A673 (cell line): ENCODE measurements at regions of chr11 and their contacts with region 1.

Region 1: GRCh38 chr11:10792398-10792975 is 16.2 kb downstream of the EIF4G2 start:
- DNase-seq: peak; percentile 74
- H3K4me3 ChIP-seq: peak overlapping the region; percentile 10
- H3K27ac ChIP-seq: no peak overlapping the region
- H3K4me1 ChIP-seq: no peaks in the 10 kb centered on the region
- H3K27me3 ChIP-seq: no peaks in the 10 kb centered on the region
- CTCF ChIP-seq: peak; percentile 91

Region 2: GRCh38 chr11:10338287-10338686 is 454.2 kb before region 1 on chr11:
- CTCF ChIA-PET with region 1: no interaction called
- POLR2A ChIA-PET with region 1: no interaction called
- intact Hi-C with region 1: no loop called
- DNase-seq: no peak
- H3K4me3 ChIP-seq: no peak overlapping the region
- H3K27ac ChIP-seq: no peak overlapping the region
- H3K4me1 ChIP-seq: no peaks in the 10 kb centered on the region
- H3K27me3 ChIP-seq: no peaks in the 10 kb centered on the region
- CTCF ChIP-seq: no peak

Region 3: DNA sequence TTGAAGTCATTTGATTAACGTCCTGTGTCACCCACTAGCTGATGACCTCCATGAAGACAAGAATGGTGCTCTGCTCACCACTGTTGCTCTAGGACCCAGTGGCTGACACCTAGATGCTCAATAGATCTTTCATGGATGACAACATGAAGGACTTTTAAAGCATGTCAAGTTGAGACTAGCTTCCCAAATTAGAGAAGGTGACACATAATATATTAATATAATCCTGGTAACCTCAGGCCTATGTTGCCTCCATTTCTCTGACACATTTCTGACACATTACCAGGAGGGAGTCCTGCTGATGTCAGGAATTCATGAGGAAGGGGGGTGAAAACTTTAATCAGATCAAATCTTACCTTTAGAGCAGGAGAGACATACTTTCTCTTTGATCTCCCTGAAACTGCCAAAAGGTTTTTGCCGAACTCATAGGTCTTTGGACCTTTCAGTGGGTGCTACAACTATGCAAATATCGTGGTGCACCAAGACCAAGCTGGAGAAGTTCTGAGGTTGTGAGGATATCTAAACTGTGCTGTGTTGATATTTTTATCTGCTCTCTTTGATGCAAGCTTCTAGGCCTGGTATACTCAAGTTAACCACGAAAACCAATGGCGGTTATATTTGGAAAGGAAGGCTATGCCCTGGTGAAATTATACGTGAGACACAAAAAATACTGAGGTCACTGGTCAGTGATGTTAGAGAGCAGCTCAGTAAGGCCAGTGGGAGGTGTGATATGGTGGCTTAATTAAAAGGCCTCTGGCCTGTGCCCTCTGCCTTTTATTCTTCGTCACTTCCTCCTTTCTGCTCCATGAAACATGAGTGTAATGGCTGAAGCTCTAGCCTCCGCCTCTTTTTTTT is 350.6 kb before region 1 on chr11:
- CTCF ChIA-PET with region 1: no interaction called
- POLR2A ChIA-PET with region 1: no interaction called
- intact Hi-C with region 1: no loop called
- DNase-seq: no peak
- H3K4me3 ChIP-seq: no peak overlapping the region
- H3K27ac ChIP-seq: no peak overlapping the region
- H3K4me1 ChIP-seq: no peaks in the 10 kb centered on the region
- H3K27me3 ChIP-seq: no peaks in the 10 kb centered on the region
- CTCF ChIP-seq: no peak

Region 4: DNA sequence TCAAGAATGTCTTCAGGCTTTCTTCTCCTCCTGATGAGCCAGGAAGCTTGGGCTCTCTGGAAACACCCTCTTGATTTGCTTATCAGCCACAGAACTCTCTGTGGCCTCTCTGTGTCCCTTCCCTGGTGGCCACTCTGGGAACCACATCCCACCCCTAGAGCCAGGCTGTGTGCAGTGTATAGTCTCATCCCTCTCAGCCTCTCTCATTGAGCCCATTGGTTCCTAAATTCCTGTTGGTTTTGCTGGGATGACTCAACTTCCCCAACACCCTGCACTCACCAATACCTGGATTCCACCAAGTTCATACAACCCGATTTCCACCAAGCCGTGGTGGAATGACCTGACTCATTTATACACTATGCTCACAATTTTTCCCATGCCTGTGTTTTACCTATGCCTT is 104.1 kb before region 1 on chr11:
- CTCF ChIA-PET with region 1: no interaction called
- POLR2A ChIA-PET with region 1: no interaction called
- intact Hi-C with region 1: no loop called
- DNase-seq: no peak
- H3K4me3 ChIP-seq: no peak overlapping the region
- H3K27ac ChIP-seq: no peak overlapping the region
- H3K4me1 ChIP-seq: no peaks in the 10 kb centered on the region
- H3K27me3 ChIP-seq: no peaks in the 10 kb centered on the region
- CTCF ChIP-seq: peak; percentile 27; the same call in 1 of the 2 replicates

Region 5: DNA sequence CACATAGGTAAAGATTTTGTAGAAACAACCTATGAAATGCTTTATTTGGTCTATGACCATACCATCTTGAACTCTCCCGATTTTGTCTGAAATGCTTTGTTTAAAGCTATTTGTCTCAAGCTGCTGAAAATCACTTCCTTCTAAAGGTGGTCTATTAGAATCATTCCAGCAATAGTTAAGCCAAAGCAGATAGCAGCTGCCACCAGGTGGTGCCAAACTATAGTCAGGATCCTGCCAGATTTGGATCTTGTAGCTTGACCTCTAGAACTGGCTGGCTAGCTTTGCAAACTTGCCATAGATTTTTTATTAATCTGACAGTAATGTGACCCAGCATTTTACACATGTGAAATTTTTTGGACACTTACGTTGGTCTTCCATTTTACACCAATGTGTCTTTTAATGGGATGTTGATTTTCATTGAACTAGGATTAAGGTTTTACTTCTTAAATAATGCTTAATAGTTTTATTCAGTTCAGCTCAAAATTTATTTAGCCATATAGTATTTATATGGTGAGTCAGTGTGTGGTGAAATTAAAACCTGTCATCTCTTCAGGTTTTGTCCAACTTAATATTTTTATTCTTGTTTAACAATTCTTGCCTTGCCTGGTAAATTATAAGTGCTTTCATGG is 21.7 kb before region 1 on chr11:
- CTCF ChIA-PET with region 1: interaction called, 14 read pairs
- POLR2A ChIA-PET with region 1: no interaction called
- intact Hi-C with region 1: no loop called
- DNase-seq: peak; percentile 45
- H3K4me3 ChIP-seq: no peak overlapping the region
- H3K27ac ChIP-seq: no peak overlapping the region
- H3K4me1 ChIP-seq: no peaks in the 10 kb centered on the region
- H3K27me3 ChIP-seq: no peaks in the 10 kb centered on the region
- CTCF ChIP-seq: peak; percentile 72

Region 6: GRCh38 chr11:10803676-10804075 is 11.2 kb after region 1 on chr11:
- CTCF ChIA-PET with region 1: interaction called, 3 read pairs
- POLR2A ChIA-PET with region 1: interaction called, 13 read pairs
- intact Hi-C with region 1: loop called (anchors 1 kb)
- DNase-seq: no peak
- H3K4me3 ChIP-seq: no peak overlapping the region
- H3K27ac ChIP-seq: no peak overlapping the region
- H3K4me1 ChIP-seq: peaks cover 18% of the 10 kb centered on the region
- H3K27me3 ChIP-seq: no peaks in the 10 kb centered on the region
- CTCF ChIP-seq: no peak

Region 7: GRCh38 chr11:10808553-10809372 is 16.3 kb after region 1 on chr11 and contains the start of gene EIF4G2:
- CTCF ChIA-PET with region 1: interaction called, 3 read pairs
- POLR2A ChIA-PET with region 1: interaction called, 13 read pairs
- intact Hi-C with region 1: loop called (anchors 1 kb)
- DNase-seq: peak; percentile 99
- H3K4me3 ChIP-seq: peak within 1 kb of the TSS; percentile 94
- H3K27ac ChIP-seq: peak within 1 kb of the TSS; percentile 98
- H3K4me1 ChIP-seq: peaks cover 18% of the 10 kb centered on the region
- H3K27me3 ChIP-seq: no peaks in the 10 kb centered on the region
- CTCF ChIP-seq: no peak
- total RNA-seq, gene EIF4G2: 1,137 and 1,198 TPM in 2 replicates

Region 8: DNA sequence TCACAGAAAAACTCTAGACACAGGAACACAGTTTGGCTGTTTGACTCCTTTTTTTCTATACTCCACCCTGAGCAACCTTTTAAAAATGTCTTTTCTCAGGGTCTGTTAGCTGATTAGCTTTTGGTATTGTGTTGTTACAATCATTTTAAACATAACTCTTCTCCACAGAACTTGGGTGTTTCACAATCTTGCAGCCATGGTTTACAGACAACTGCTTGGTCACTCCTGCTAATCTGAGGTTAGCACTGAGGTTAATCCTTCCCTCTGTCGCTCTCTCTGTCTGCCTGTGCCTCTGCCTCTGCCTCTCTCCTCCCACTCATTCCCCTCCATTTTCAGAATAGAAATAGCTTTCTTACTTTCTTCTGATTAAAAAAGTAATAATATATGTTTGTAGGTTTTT is 127.7 kb after region 1 on chr11:
- CTCF ChIA-PET with region 1: no interaction called
- POLR2A ChIA-PET with region 1: no interaction called
- intact Hi-C with region 1: no loop called
- DNase-seq: no peak
- H3K4me3 ChIP-seq: no peak overlapping the region
- H3K27ac ChIP-seq: no peak overlapping the region
- H3K4me1 ChIP-seq: no peaks in the 10 kb centered on the region
- H3K27me3 ChIP-seq: no peaks in the 10 kb centered on the region
- CTCF ChIP-seq: no peak

Region 9: DNA sequence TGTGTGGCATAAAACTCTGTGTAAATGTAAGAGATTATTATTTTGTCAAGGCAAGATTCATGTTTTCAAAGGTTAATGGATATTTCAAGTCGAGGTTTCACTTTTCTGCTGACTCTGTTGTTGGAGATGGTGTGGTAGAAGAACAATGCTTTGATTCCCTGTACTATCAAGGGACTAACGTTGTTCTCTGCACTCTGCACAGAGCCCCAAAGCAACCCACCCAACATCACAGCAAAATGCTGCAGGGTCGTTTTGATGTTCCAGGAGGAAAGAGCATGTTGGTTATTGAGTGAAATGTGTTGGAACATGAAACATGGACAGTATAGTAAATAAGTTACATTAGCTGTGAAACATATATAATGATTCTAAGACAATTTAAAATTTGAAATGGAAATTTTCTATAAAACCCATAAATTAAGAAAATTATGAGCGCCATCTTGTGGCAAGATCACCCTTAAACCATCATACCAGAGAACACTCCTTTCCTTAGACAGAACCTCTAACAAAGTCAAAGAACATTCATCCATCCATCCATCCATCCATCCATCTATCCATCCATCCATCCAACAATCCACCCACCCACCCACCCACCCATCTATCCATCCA is 229.7 kb after region 1 on chr11:
- CTCF ChIA-PET with region 1: interaction called, 7 read pairs
- POLR2A ChIA-PET with region 1: no interaction called
- intact Hi-C with region 1: loop called (anchors 1 kb)
- DNase-seq: peak; percentile 21
- H3K4me3 ChIP-seq: no peak overlapping the region
- H3K27ac ChIP-seq: no peak overlapping the region
- H3K4me1 ChIP-seq: no peaks in the 10 kb centered on the region
- H3K27me3 ChIP-seq: no peaks in the 10 kb centered on the region
- CTCF ChIP-seq: peak; percentile 52; the same call in 1 of the 2 replicates

Region 10: DNA sequence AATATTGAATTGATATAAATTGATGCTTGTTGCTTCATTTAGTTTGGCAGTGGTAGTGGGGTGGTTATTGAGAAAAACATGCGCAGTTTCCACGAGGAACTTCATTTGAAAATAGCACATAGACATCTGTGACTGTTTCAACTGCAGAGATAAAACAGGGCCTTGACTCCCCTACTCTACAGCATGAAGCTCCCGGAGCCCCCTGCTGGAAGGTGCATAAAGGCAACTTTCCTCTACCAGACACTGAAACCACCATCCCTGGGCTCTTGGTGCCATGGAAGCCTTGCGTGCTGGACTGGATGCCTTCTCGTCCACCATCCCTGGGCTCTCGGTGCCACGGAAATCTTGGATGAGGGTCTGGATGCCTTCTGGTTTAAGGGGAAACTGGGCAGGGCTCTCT is 364.7 kb after region 1 on chr11:
- CTCF ChIA-PET with region 1: no interaction called
- POLR2A ChIA-PET with region 1: no interaction called
- intact Hi-C with region 1: loop called (anchors 10 kb)
- DNase-seq: peak; percentile 54
- H3K4me3 ChIP-seq: no peak overlapping the region
- H3K27ac ChIP-seq: no peak overlapping the region
- H3K4me1 ChIP-seq: no peaks in the 10 kb centered on the region
- H3K27me3 ChIP-seq: no peaks in the 10 kb centered on the region
- CTCF ChIP-seq: peak; percentile 55

Region 11: GRCh38 chr11:11787305-11788062 is 995.0 kb after region 1 on chr11:
- CTCF ChIA-PET with region 1: interaction called, 8 read pairs
- POLR2A ChIA-PET with region 1: no interaction called
- intact Hi-C with region 1: loop called (anchors 10 kb)
- DNase-seq: peak; percentile 77
- H3K4me3 ChIP-seq: no peak overlapping the region
- H3K27ac ChIP-seq: no peak overlapping the region
- H3K4me1 ChIP-seq: no peaks in the 10 kb centered on the region
- H3K27me3 ChIP-seq: peaks cover 9% of the 10 kb centered on the region
- CTCF ChIP-seq: peak; percentile 80